ENCODE measurements at regions of chr14 and their contacts with region 1.

Region 1: GRCh38 chr14:63641473-63642228 is at the start of gene WDR89:
- DNase-seq: peak; percentile 100
- ATAC-seq: peak; percentile 91
- H3K4me3 ChIP-seq: peak within 1 kb of the TSS; percentile 69
- H3K27ac ChIP-seq: peak within 1 kb of the TSS; percentile 99
- H3K4me1 ChIP-seq: peaks cover 17% of the 10 kb centered on the region
- H3K27me3 ChIP-seq: no peaks in the 10 kb centered on the region
- CTCF ChIP-seq: peak; percentile 55 to 79 (median 76)
- EP300 ChIP-seq: peak; percentile 34 to 56; a peak in 2 of 4 replicates
- POLR2A ChIP-seq: peak; percentile 91
- RAD21 ChIP-seq: peak; percentile 33; the same call in 1 of the 2 replicates
- polyA plus RNA-seq, gene WDR89: 17.3 to 17.6 TPM

Region 2: GRCh38 chr14:63478010-63478409 is 163.6 kb before region 1 on chr14:
- CTCF ChIA-PET with region 1: no interaction called
- POLR2A ChIA-PET with region 1: interaction called, 3 read pairs
- RAD21 ChIA-PET with region 1: no interaction called
- SMC1A ChIA-PET with region 1: interaction called, 11 read pairs
- in situ Hi-C with region 1: no loop called
- intact Hi-C with region 1: no loop called
- DNase-seq: peak; percentile 79
- ATAC-seq: peak; percentile 88
- H3K4me3 ChIP-seq: 0 out of 2 replicates have a peak overlapping the region, but pooled peaks have one; percentile 28
- H3K27ac ChIP-seq: peak overlapping the region; percentile 81
- H3K4me1 ChIP-seq: peaks cover 29% of the 10 kb centered on the region
- H3K27me3 ChIP-seq: no peaks in the 10 kb centered on the region
- CTCF ChIP-seq: no peak
- EP300 ChIP-seq: peak in 1 of 2 experiments; percentile 81; a peak in 2 of 4 replicates
- POLR2A ChIP-seq: no peak
- RAD21 ChIP-seq: no peak

Region 3: GRCh38 chr14:63672417-63673180 is 30.9 kb after region 1 on chr14:
- CTCF ChIA-PET with region 1: interaction called, 14 read pairs
- POLR2A ChIA-PET with region 1: interaction called, 4 read pairs
- RAD21 ChIA-PET with region 1: interaction called, 6 read pairs
- SMC1A ChIA-PET with region 1: interaction called, 10 read pairs
- in situ Hi-C with region 1: no loop called
- intact Hi-C with region 1: no loop called
- DNase-seq: peak; percentile 62
- ATAC-seq: peak; percentile 90
- H3K4me3 ChIP-seq: no peak overlapping the region
- H3K27ac ChIP-seq: no peak overlapping the region
- H3K4me1 ChIP-seq: no peaks in the 10 kb centered on the region
- H3K27me3 ChIP-seq: no peaks in the 10 kb centered on the region
- CTCF ChIP-seq: no peak
- EP300 ChIP-seq: peak; percentile 41 to 73; a peak in 2 of 4 replicates
- POLR2A ChIP-seq: no peak
- RAD21 ChIP-seq: no peak

Region 4: DNA sequence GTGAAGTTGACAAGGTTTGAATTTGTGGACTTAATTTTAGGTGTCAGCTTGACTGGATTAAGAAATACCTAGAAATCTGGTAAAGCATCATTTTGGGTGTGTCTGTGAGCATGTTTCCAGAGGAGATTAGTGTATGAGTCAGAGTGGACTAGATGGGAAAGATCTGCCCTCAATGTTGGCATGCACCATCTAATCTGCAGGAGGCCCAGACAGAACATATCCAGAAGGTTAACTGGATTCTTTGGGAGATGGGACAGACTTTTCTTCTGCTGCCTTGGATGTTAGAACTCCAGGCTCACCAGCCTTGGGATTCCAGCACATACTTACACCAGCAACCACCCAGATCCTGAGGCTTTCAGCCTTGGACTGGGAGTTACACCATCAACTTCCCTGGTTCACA is 72.1 kb after region 1 on chr14:
- CTCF ChIA-PET with region 1: interaction called, 4 read pairs
- POLR2A ChIA-PET with region 1: interaction called, 17 read pairs
- RAD21 ChIA-PET with region 1: interaction called, 4 read pairs
- SMC1A ChIA-PET with region 1: interaction called, 8 read pairs
- in situ Hi-C with region 1: no loop called
- intact Hi-C with region 1: loop called (anchors 5 kb)
- DNase-seq: no peak
- ATAC-seq: no peak; the same call in 2 of the 3 replicates
- H3K4me3 ChIP-seq: no peak overlapping the region
- H3K27ac ChIP-seq: no peak overlapping the region
- H3K4me1 ChIP-seq: peaks cover 16% of the 10 kb centered on the region
- H3K27me3 ChIP-seq: no peaks in the 10 kb centered on the region
- CTCF ChIP-seq: no peak
- EP300 ChIP-seq: no peak
- POLR2A ChIP-seq: no peak
- RAD21 ChIP-seq: no peak

Region 5: GRCh38 chr14:63745858-63746425 is 104.3 kb after region 1 on chr14:
- CTCF ChIA-PET with region 1: interaction called, 4 read pairs
- POLR2A ChIA-PET with region 1: interaction called, 13 read pairs
- RAD21 ChIA-PET with region 1: interaction called, 11 read pairs
- SMC1A ChIA-PET with region 1: interaction called, 17 read pairs
- in situ Hi-C with region 1: no loop called
- intact Hi-C with region 1: no loop called
- DNase-seq: peak; percentile 80
- ATAC-seq: peak; percentile 76
- H3K4me3 ChIP-seq: no peak overlapping the region
- H3K27ac ChIP-seq: peak overlapping the region; percentile 75
- H3K4me1 ChIP-seq: peaks cover 36% of the 10 kb centered on the region
- H3K27me3 ChIP-seq: no peaks in the 10 kb centered on the region
- CTCF ChIP-seq: peak in 2 of 3 experiments; percentile 8 to 9; a peak in 1 of 6 replicates
- EP300 ChIP-seq: peak; percentile 38 to 65; a peak in 3 of 4 replicates
- POLR2A ChIP-seq: 0 out of 2 replicates have a peak, but pooled peaks have one; percentile 33
- RAD21 ChIP-seq: 0 out of 2 replicates have a peak, but pooled peaks have one; percentile 31

Region 6: DNA sequence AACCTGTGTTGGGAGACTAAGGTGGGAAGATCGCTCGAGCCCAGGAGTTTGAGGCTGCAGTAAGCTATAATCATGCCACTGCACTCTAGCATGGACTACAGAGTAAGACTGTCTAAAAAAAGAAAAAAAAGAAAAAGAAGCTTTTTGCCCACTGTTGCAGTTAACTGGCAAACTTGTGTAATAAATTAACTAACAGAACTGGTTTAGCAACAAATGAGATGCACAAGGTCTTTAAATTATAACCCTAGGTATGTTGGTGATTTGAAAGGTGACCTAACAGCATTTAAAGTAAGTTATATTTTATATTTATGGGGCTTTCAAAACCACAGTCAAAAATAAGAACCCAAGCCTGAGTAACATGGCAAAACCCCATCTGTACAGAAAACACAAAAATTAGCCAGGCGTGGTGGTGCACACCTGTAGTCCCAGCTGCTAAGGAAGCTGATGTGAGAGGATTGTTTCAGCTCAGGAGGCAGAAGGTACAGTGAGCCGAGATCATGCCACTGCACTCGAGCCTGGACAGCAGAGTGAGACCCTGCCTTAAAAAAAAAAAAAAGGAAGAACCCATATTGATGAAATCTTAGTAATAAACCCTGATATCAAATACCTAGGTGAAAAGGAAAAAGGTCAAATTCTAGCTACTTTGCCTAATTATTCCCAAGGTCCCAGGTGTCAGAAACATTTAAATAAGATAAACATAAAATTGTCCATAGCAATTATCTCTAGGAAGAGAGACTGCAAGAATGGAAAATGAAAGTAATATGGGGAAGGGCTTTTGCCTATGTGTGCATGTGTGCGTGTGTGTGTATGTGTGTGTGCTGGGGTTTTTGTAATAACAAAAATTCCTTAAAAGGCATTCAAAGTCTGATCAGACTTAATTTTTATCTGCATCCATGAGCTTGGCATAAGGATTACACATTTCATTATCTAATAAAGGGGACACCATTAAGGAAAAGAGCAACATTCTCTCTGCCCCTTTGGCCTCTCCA is 226.6 kb after region 1 on chr14:
- CTCF ChIA-PET with region 1: no interaction called
- POLR2A ChIA-PET with region 1: no interaction called
- RAD21 ChIA-PET with region 1: no interaction called
- SMC1A ChIA-PET with region 1: no interaction called
- in situ Hi-C with region 1: no loop called
- intact Hi-C with region 1: loop called (anchors 5 kb)
- DNase-seq: peak; percentile 56
- ATAC-seq: peak; percentile 5
- H3K4me3 ChIP-seq: peak overlapping the region; percentile 34; the same call in 1 of the 2 replicates
- H3K27ac ChIP-seq: peak overlapping the region; percentile 69
- H3K4me1 ChIP-seq: peaks cover 57% of the 10 kb centered on the region
- H3K27me3 ChIP-seq: no peaks in the 10 kb centered on the region
- CTCF ChIP-seq: no peak
- EP300 ChIP-seq: no peak
- POLR2A ChIP-seq: no peak
- RAD21 ChIP-seq: no peak

Measured in GM12878 (cell line).